ENCODE measurements at regions of chr11 and their contacts with region 1.

Region 1: GRCh38 chr11:62860835-62861563 is 19.7 kb upstream of the SLC3A2 start:
- DNase-seq: no peak
- ATAC-seq: no peak
- H3K4me3 Mint-ChIP-seq: no peak overlapping the region
- H3K27ac Mint-ChIP-seq: peak overlapping the region; percentile 61
- H3K4me1 Mint-ChIP-seq: peaks cover 41% of the 10 kb centered on the region
- H3K27me3 Mint-ChIP-seq: no peaks in the 10 kb centered on the region
- CTCF ChIP-seq: no peak

Region 2: DNA sequence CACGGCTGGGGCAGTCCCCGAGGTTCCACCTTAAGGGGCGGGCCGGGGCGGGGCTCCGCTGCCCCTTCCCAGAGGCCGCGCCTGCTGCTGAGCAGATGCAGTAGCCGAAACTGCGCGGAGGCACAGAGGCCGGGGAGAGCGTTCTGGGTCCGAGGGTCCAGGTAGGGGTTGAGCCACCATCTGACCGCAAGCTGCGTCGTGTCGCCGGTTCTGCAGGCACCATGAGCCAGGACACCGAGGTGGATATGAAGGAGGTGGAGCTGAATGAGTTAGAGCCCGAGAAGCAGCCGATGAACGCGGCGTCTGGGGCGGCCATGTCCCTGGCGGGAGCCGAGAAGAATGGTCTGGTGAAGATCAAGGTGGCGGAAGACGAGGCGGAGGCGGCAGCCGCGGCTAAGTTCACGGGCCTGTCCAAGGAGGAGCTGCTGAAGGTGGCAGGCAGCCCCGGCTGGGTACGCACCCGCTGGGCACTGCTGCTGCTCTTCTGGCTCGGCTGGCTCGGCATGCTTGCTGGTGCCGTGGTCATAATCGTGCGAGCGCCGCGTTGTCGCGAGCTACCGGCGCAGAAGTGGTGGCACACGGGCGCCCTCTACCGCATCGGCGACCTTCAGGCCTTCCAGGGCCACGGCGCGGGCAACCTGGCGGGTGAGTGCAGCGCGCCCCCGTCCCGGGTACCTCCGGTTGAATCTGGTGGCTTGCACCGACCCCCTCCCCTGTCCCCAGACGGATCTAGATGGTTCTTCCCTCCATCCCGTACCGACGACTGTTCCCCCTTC is 20.0 kb after region 1 on chr11 and contains the start of gene SLC3A2:
- CTCF ChIA-PET with region 1: interaction called, 9 read pairs
- POLR2A ChIA-PET with region 1: interaction called, 495 read pairs
- intact Hi-C with region 1: no loop called
- DNase-seq: peak; percentile 91
- ATAC-seq: peak; percentile 76
- H3K4me3 Mint-ChIP-seq: peak within 1 kb of the TSS; percentile 99
- H3K27ac Mint-ChIP-seq: peak within 1 kb of the TSS; percentile 100
- H3K4me1 Mint-ChIP-seq: peaks cover 41% of the 10 kb centered on the region
- H3K27me3 Mint-ChIP-seq: no peaks in the 10 kb centered on the region
- CTCF ChIP-seq: peak; percentile 71
- total RNA-seq, gene SLC3A2: 299 to 315 TPM

Region 3: DNA sequence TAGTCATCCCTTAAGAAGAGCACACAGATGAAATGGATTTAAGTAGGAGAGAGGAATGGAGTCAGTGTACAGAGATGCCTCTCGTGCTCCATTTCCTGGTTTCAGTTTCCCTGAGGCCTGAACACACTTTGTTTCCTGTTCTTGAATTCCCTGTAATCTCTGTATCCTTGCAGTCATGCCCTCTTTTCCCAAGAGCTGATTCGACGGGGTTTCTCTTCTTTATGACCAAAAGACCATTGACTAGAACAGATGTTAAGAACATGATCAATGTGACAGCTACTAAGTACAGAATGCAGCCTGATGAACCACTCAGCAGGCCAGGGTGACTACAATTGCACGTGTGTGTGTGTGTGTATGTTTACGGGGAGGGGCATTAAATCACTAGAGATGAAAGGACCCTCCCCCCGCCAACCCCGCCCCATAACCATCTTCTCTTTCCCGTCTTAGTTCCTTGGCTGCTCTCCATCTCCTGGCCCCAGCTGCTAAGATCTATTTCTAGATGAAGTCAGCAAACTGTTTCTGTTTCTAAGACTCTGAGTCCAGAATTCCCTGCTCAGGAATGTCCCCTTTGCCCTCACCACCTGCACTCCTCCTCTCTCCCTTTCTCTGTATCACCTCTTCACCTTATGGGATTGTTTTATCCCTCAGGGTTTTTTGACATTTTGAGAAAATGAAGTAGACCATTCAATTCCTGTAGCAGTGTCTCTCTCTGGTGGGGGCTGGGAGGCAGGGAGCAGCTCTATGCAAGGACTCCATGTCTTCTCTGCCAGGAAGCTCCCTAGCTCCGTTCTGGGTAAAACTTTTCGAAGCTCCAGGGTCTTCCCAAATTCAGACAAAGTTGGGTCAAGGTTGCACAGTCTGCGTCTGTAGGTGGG is 97.8 kb after region 1 on chr11:
- CTCF ChIA-PET with region 1: no interaction called
- POLR2A ChIA-PET with region 1: no interaction called
- intact Hi-C with region 1: no loop called
- DNase-seq: no peak
- ATAC-seq: no peak
- H3K4me3 Mint-ChIP-seq: no peak overlapping the region
- H3K27ac Mint-ChIP-seq: no peak overlapping the region
- H3K4me1 Mint-ChIP-seq: no peaks in the 10 kb centered on the region
- H3K27me3 Mint-ChIP-seq: peaks cover 6% of the 10 kb centered on the region
- CTCF ChIP-seq: no peak